Activated CD8-positive, alpha-beta T cell treated with anti-CD3 and anti-CD28 coated beads, Interleukin-2, amount 10 ng/mL, durations not matched to agents 7 days and 5 days (primary cell): ENCODE measurements at regions of chr1 and their contacts with region 1.

Region 1: GRCh38 chr1:161098210-161099068 is at the start of gene KLHDC9:
- DNase-seq: peak; percentile 86
- ATAC-seq: peak; percentile 78
- H3K4me3 Mint-ChIP-seq: peak within 1 kb of the TSS; percentile 80
- H3K27ac Mint-ChIP-seq: peak within 1 kb of the TSS; percentile 91
- H3K4me1 Mint-ChIP-seq: peaks cover 30% of the 10 kb centered on the region
- H3K27me3 Mint-ChIP-seq: peaks cover 2% of the 10 kb centered on the region
- total RNA-seq, gene KLHDC9: 0.61 to 0.91 TPM

Region 2: DNA sequence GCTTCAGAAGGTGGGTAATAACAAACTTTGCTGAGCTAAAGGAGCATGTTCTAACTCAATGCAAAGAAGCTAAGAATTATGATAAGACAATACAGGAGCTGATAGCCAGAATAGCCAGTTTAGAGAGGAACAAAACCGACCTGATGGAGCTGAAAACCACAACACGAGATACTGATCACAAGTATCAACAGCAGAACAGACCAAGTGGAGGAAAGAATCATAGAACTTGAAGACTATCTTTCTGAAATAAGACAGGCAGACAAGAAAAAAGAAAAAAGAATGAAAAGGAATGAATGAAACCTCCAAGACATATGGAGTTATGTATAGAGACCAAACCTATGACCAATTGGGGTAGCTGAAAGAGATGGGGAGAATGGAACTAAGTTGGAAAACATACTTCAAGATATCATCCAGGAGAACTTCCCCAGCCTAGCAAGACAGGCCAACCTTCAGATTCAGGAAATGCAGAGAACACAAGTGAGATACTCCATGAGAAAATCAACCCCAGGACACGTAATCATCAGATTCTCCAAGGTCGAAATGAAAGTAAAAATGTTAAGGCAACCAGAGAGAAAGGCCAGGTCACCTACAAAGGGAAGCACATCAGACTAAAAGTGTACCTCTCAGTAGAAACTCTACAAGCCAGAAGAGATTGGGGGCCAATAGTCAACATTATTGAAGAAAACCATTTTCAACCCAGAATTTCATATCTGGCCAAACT is 539.6 kb before region 1 on chr1:
- CTCF ChIA-PET with region 1: no interaction called
- POLR2A ChIA-PET with region 1: no interaction called
- DNase-seq: no peak
- ATAC-seq: peak; percentile 27
- H3K4me3 Mint-ChIP-seq: peak overlapping the region; percentile 51
- H3K27ac Mint-ChIP-seq: peak overlapping the region; percentile 53
- H3K4me1 Mint-ChIP-seq: peaks cover 42% of the 10 kb centered on the region
- H3K27me3 Mint-ChIP-seq: no peaks in the 10 kb centered on the region

Region 3: GRCh38 chr1:160997323-160998038 is 101.0 kb before region 1 on chr1:
- CTCF ChIA-PET with region 1: interaction called, 100 read pairs
- POLR2A ChIA-PET with region 1: interaction called, 3 read pairs
- DNase-seq: peak; percentile 68
- ATAC-seq: peak; percentile 84
- H3K4me3 Mint-ChIP-seq: no peak overlapping the region
- H3K27ac Mint-ChIP-seq: no peak overlapping the region
- H3K4me1 Mint-ChIP-seq: no peaks in the 10 kb centered on the region
- H3K27me3 Mint-ChIP-seq: no peaks in the 10 kb centered on the region

Region 4: DNA sequence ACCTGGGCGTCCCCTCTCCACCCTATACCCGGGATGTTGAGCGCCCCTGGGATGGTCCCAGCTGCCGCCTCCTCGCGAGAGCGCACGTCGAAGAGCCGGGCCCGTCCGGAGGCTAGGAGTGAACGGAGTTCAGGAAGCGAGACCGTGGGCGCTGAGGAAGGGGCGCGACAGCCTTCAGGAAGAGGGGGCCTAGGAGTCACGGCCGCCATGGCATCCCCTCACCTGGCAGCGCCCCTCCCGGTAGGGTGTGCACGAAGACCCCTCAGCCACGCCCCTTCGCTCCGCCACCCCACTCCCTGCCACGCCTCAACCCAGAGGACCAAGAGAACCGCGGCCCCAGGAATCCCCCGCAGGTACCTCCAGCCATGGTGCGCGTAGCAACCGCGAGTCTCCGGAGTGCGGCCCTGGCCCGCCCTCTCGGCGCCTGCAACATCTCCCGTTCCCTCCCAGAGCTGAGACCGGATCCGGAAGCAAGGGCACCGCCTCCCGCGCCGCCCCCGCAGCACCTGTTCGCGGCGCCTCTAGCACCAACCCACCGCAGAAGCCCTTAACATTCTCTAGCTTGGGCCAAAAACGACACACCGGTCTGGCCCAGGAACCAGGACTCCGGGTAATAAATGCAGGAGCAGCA is 59.8 kb before region 1 on chr1 and contains the start of gene TSTD1:
- CTCF ChIA-PET with region 1: interaction called, 18 read pairs
- POLR2A ChIA-PET with region 1: interaction called, 10 read pairs
- DNase-seq: peak; percentile 89
- ATAC-seq: peak; percentile 91
- H3K4me3 Mint-ChIP-seq: peak within 1 kb of the TSS; percentile 91
- H3K27ac Mint-ChIP-seq: peak within 1 kb of the TSS; percentile 94
- H3K4me1 Mint-ChIP-seq: peaks cover 63% of the 10 kb centered on the region
- H3K27me3 Mint-ChIP-seq: no peaks in the 10 kb centered on the region
- total RNA-seq, gene TSTD1: 63.2 to 63.3 TPM

Region 5: DNA sequence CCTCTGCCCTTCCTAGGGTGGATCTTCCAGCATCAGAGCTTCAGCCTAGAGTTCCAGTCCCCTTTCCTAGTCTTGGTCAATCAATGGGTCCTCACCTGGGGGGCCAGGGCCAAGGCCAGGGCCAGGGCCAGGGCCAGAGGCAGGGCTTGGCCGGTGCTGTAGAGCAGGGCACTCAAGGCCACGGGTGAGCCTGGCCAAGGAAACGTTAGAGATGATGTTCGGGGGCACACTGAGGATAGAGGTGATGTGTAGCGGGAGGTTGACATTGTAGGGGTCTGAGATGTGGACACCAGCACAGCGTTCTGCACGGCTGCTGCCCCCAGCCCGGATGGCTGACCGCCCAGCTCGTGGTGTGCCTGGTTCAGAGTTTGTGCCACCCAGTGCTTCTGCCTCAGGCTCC is 47.2 kb before region 1 on chr1:
- CTCF ChIA-PET with region 1: interaction called, 52 read pairs
- POLR2A ChIA-PET with region 1: interaction called, 20 read pairs
- DNase-seq: no peak
- ATAC-seq: no peak
- H3K4me3 Mint-ChIP-seq: no peak overlapping the region
- H3K27ac Mint-ChIP-seq: no peak overlapping the region
- H3K4me1 Mint-ChIP-seq: peaks cover 41% of the 10 kb centered on the region
- H3K27me3 Mint-ChIP-seq: no peaks in the 10 kb centered on the region

Region 6: GRCh38 chr1:161080391-161081355 is 17.8 kb before region 1 on chr1:
- CTCF ChIA-PET with region 1: interaction called, 292 read pairs
- POLR2A ChIA-PET with region 1: interaction called, 4 read pairs
- DNase-seq: no peak
- ATAC-seq: no peak
- H3K4me3 Mint-ChIP-seq: no peak overlapping the region
- H3K27ac Mint-ChIP-seq: no peak overlapping the region
- H3K4me1 Mint-ChIP-seq: peaks cover 3% of the 10 kb centered on the region
- H3K27me3 Mint-ChIP-seq: peaks cover 5% of the 10 kb centered on the region

Region 7: DNA sequence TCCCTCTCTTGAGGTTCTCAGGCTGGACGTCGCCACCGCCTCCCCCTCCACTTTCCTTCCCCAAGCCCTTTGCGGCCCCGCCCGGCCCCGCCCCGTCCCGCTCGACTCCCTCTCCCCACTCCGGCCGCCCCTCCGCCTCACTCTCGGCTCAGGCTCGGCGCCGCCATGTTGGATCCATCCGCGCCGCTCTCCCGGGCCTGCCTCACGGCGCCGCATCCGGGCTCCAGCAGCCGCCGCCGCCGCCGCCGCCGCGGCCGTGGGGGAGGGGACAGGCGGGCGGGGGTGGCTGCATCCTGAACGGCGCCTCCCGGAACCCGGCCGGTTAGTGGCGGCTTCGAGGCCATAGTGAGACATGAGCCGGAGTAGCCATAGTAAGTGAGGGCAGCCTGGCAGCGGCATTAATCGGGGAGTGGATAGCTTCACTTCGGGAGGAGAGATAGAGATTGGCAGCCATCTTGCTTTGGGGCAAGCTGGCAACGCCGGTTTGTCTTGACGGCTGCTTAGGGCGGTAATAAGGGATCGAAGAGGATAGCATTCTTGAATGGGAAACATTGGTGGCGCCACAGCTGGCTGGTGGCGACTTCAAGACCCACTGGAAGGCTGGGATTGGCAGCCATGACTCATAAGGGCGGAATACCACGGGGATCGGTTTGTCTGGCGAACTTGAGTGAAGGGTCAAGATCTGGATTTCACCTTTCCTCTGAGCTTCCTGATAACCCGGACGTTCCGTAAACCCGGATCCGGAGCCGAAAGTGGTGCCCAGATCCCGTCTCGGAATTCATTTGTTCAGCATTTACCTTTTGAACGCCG is 34.2 kb after region 1 on chr1 and contains the start of gene DEDD:
- CTCF ChIA-PET with region 1: interaction called, 16 read pairs
- POLR2A ChIA-PET with region 1: interaction called, 5 read pairs
- DNase-seq: peak; percentile 93
- ATAC-seq: peak; percentile 96
- H3K4me3 Mint-ChIP-seq: no peak within 1 kb of the TSS
- H3K27ac Mint-ChIP-seq: no peak within 1 kb of the TSS
- H3K4me1 Mint-ChIP-seq: peaks cover 45% of the 10 kb centered on the region
- H3K27me3 Mint-ChIP-seq: no peaks in the 10 kb centered on the region
- total RNA-seq, gene DEDD: 34.5 to 36.3 TPM